ENCODE measurements at regions of chr1 and their contacts with region 1.

Region 1: DNA sequence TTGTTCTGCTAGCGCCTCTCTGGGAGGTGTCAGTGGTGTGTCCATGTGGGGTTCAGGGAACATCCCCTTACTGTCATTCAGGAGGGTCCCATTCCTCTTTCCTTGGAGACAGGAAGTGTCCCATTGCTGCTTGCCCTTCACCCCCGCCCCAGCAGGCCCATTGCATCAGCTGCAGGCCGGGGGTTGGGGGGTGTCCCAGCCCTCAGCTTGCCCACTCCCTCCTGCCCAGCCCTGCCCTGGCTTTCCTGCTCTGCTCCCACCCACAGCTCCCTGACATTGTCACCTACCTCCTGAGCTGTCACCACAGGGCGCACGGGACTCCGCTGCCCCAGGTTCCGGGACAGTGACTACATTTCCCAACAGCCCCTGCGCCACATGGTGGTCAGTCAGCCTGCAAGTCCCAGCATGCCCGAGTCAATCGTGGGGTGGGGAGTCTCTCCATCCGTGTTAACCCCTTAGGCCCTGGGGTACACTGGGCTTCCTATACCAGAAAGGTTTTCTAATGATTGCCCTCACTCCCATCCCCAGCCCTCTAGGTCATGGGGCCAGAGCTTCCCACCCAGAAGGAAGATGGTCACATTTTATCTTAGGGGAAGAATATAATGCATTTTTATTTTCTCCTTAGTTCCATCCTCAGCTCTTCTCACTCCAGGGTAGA is at the start of gene INPP5B:
- DNase-seq: peak; percentile 67 to 90
- H3K4me3 ChIP-seq: peak within 1 kb of the TSS; percentile 51 to 89 (median 72)
- H3K27ac ChIP-seq: peak within 1 kb of the TSS; percentile 74; the same call in 1 of the 2 replicates
- H3K4me1 ChIP-seq: peaks cover 0 to 4% (median 1%) of the 10 kb centered on the region in 4 experiments; a peak in 5 of 7 replicates
- H3K27me3 ChIP-seq: no peaks in the 10 kb centered on the region
- CTCF ChIP-seq: no peak
- EP300 ChIP-seq: no peak
- POLR2A ChIP-seq: no peak
- RAD21 ChIP-seq: no peak
- total RNA-seq, gene INPP5B: 23.7 and 25.1 TPM in 2 replicates

Region 2: GRCh38 chr1:37958690-37959089 is 11.9 kb after region 1 on chr1:
- CTCF ChIA-PET with region 1: interaction called, 6 read pairs
- POLR2A ChIA-PET with region 1: interaction called, 12 read pairs
- DNase-seq: no peak
- H3K4me3 ChIP-seq: no peak overlapping the region
- H3K27ac ChIP-seq: no peak overlapping the region
- H3K4me1 ChIP-seq: no peaks in the 10 kb centered on the region
- H3K27me3 ChIP-seq: no peaks in the 10 kb centered on the region
- CTCF ChIP-seq: no peak
- EP300 ChIP-seq: no peak
- POLR2A ChIP-seq: no peak
- RAD21 ChIP-seq: no peak

Measured in H1 (cell line).